CD4-positive, alpha-beta memory T cell (primary cell): ENCODE measurements at regions of chr6 and their contacts with region 1.

Region 1: GRCh38 chr6:151349651-151350282 is 41.6 kb downstream of the ZBTB2 start:
- DNase-seq: no peak
- H3K4me3 ChIP-seq: no peak overlapping the region
- H3K4me3 Mint-ChIP-seq: peak overlapping the region in 1 of 8 donors; percentile 8
- H3K27ac ChIP-seq: no peak overlapping the region
- H3K27ac Mint-ChIP-seq: peak overlapping the region in 2 of 7 donors; percentile 1 to 39
- H3K4me1 ChIP-seq: peaks cover 13% of the 10 kb centered on the region
- H3K4me1 Mint-ChIP-seq: no peaks in the 10 kb centered on the region
- H3K27me3 ChIP-seq: no peaks in the 10 kb centered on the region
- H3K27me3 Mint-ChIP-seq: peaks cover 0 to 5% of the 10 kb centered on the region in 2 donors

Region 2: GRCh38 chr6:151339369-151339768 is 10.4 kb before region 1 on chr6:
- CTCF ChIA-PET with region 1: interaction called, 35 read pairs
- POLR2A ChIA-PET with region 1: no interaction called
- intact Hi-C with region 1: no loop called
- DNase-seq: no peak
- H3K4me3 ChIP-seq: no peak overlapping the region
- H3K4me3 Mint-ChIP-seq: no peak overlapping the region
- H3K27ac ChIP-seq: no peak overlapping the region
- H3K27ac Mint-ChIP-seq: no peak overlapping the region
- H3K4me1 ChIP-seq: no peaks in the 10 kb centered on the region
- H3K4me1 Mint-ChIP-seq: peaks cover 0 to 4% (median 3%) of the 10 kb centered on the region in 4 donors
- H3K27me3 ChIP-seq: no peaks in the 10 kb centered on the region
- H3K27me3 Mint-ChIP-seq: peaks cover 3 to 4% of the 10 kb centered on the region in 2 donors